Left ventricle myocardium inferior (tissue), 1 donor: ENCODE measurements at regions of chr1 and their contacts with region 1.

Region 1: GRCh38 chr1:151210830-151211229 is 12.5 kb downstream of the PIP5K1A start:
- DNase-seq: no peak
- H3K4me3 ChIP-seq: no peak overlapping the region
- H3K27ac ChIP-seq: no peak overlapping the region
- H3K4me1 ChIP-seq: peaks cover 39% of the 10 kb centered on the region
- H3K27me3 ChIP-seq: no peaks in the 10 kb centered on the region
- CTCF ChIP-seq: no peak

Region 2: GRCh38 chr1:150995896-150996295 is 214.9 kb before region 1 on chr1:
- intact Hi-C with region 1: no loop called
- DNase-seq: peak; percentile 28
- H3K4me3 ChIP-seq: peak overlapping the region; percentile 36
- H3K27ac ChIP-seq: peak overlapping the region; percentile 73
- H3K4me1 ChIP-seq: peaks cover 18% of the 10 kb centered on the region
- H3K27me3 ChIP-seq: no peaks in the 10 kb centered on the region
- CTCF ChIP-seq: peak; percentile 88

Region 3: GRCh38 chr1:151146412-151147140 is 64.3 kb before region 1 on chr1 and contains the start of gene SEMA6C:
- intact Hi-C with region 1: no loop called
- DNase-seq: peak; percentile 96
- H3K4me3 ChIP-seq: peak within 1 kb of the TSS; percentile 90
- H3K27ac ChIP-seq: peak within 1 kb of the TSS; percentile 92
- H3K4me1 ChIP-seq: peaks cover 60% of the 10 kb centered on the region
- H3K27me3 ChIP-seq: no peaks in the 10 kb centered on the region
- CTCF ChIP-seq: no peak
- total RNA-seq, gene SEMA6C: 77.7 TPM

Region 4: DNA sequence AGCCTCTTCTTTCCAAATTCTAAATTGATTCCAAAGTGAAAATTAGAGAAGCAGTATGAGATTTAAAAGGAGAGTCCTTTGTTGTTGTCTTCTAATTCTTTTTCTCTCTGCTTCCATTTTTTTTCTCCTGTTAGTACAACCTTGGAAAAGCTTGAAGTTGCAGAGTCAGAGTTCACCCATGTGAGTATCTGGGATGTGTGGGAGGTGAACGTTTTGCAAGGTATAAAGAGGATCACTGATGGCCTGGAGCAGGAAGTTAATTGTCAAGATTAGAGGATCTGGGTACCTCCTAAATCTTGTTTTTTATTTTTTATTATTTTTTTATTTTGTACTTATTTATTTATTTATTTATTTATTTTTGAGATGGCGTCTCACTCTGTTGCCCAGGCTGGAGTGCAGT is 36.0 kb after region 1 on chr1:
- intact Hi-C with region 1: loop called (anchors 5 kb)
- DNase-seq: no peak
- H3K4me3 ChIP-seq: no peak overlapping the region
- H3K27ac ChIP-seq: no peak overlapping the region
- H3K4me1 ChIP-seq: no peaks in the 10 kb centered on the region
- H3K27me3 ChIP-seq: no peaks in the 10 kb centered on the region
- CTCF ChIP-seq: no peak